Motor neuron (in vitro differentiated cells): ENCODE measurements at regions of chr10 and their contacts with region 1.

Region 1: DNA sequence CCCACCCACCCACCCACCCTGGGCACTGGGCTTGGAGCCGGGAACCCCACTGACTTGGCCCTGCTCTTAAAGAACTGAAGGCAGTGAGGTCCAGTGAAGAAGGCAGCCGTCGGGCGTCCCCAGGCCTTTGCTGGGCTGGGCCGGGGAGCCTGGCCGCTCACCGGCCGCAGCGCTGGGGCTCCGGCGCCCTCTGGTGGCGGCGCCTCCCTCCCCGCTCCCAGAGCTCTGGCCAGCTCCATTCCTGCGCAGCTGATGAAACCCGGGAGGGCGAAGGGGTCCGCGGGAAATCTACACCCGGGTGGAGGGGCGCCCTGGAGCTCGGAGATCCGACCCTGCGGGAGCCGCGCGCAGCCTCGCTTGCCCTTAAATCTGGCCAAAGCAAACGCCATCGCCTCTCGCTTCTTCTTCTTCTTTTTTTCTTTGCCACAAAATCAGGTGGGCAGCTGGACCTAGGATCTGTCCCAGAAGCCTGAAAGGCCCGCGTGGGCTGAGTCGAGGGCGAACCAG is 1.7 kb upstream of the CXCL12 start:
- ATAC-seq: peak; percentile 65 to 94 (median 80)
- H3K4me3 ChIP-seq: peak overlapping the region in 2 of 5 donors; percentile 6 to 7
- H3K27ac ChIP-seq: no peak overlapping the region
- H3K4me1 ChIP-seq: peaks cover 20 to 21% of the 10 kb centered on the region in 2 donors

Region 2: GRCh38 chr10:43671656-43672531 is 714.7 kb before region 1 on chr10:
- in situ Hi-C with region 1: loop called in 8 of 9 experiments (anchors 25 kb)
- ATAC-seq: peak; percentile 64 to 90 (median 83)
- H3K4me3 ChIP-seq: no peak overlapping the region
- H3K27ac ChIP-seq: no peak overlapping the region
- H3K4me1 ChIP-seq: peaks cover 0 to 9% of the 10 kb centered on the region in 2 donors

Region 3: GRCh38 chr10:43689955-43690771 is 696.4 kb before region 1 on chr10:
- in situ Hi-C with region 1: loop called in 4 of 9 experiments (anchors 25 kb)
- ATAC-seq: peak; percentile 94 to 100 (median 96)
- H3K4me3 ChIP-seq: peak overlapping the region; percentile 37 to 55 (median 41)
- H3K27ac ChIP-seq: peak overlapping the region; percentile 68 to 69
- H3K4me1 ChIP-seq: peaks cover 0 to 6% of the 10 kb centered on the region in 2 donors

Region 4: GRCh38 chr10:44589181-44589943 is 202.8 kb after region 1 on chr10:
- in situ Hi-C with region 1: no loop called
- ATAC-seq: no peak
- H3K4me3 ChIP-seq: no peak overlapping the region
- H3K27ac ChIP-seq: no peak overlapping the region
- H3K4me1 ChIP-seq: peaks cover 0 to 2% of the 10 kb centered on the region in 2 donors